ENCODE measurements at regions of chr1 and their contacts with region 1.

Region 1: DNA sequence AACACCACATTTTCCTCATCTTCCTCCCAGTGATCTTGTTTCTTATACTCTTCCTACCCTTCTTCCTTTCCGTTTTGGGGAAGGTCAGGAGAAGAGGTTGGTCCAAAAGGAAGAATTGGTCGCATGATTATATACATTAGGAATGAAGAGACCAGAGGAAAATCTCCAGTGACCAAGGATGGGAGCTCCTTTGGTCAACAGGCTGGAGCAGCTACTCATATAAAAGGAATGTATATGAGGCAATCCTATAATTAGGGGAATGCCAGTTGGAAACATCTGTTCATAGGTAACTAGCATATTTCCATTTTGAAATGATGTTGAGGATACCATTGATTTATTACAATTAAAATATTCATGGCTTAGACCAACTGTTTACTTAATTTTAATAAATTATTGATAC is 114.5 kb downstream of the LRRC40 start:
- DNase-seq: no peak
- H3K4me3 ChIP-seq: no peak overlapping the region
- H3K27ac ChIP-seq: no peak overlapping the region
- H3K4me1 ChIP-seq: no peaks in the 10 kb centered on the region
- CTCF ChIP-seq: no peak

Region 2: GRCh38 chr1:70048336-70049094 is 42.4 kb before region 1 on chr1:
- CTCF ChIA-PET with region 1: no interaction called
- POLR2A ChIA-PET with region 1: no interaction called
- intact Hi-C with region 1: no loop called
- DNase-seq: no peak
- H3K4me3 ChIP-seq: no peak overlapping the region
- H3K27ac ChIP-seq: no peak overlapping the region
- H3K4me1 ChIP-seq: no peaks in the 10 kb centered on the region
- CTCF ChIP-seq: no peak

Region 3: GRCh38 chr1:70103770-70104169 is 12.9 kb after region 1 on chr1:
- CTCF ChIA-PET with region 1: no interaction called
- POLR2A ChIA-PET with region 1: interaction called, 12 read pairs
- intact Hi-C with region 1: no loop called
- DNase-seq: no peak
- H3K4me3 ChIP-seq: no peak overlapping the region
- H3K27ac ChIP-seq: no peak overlapping the region
- H3K4me1 ChIP-seq: no peaks in the 10 kb centered on the region
- CTCF ChIP-seq: no peak

Measured in OCI-LY7 (cell line).